ENCODE measurements at regions of chr1 and their contacts with region 1.

Region 1: DNA sequence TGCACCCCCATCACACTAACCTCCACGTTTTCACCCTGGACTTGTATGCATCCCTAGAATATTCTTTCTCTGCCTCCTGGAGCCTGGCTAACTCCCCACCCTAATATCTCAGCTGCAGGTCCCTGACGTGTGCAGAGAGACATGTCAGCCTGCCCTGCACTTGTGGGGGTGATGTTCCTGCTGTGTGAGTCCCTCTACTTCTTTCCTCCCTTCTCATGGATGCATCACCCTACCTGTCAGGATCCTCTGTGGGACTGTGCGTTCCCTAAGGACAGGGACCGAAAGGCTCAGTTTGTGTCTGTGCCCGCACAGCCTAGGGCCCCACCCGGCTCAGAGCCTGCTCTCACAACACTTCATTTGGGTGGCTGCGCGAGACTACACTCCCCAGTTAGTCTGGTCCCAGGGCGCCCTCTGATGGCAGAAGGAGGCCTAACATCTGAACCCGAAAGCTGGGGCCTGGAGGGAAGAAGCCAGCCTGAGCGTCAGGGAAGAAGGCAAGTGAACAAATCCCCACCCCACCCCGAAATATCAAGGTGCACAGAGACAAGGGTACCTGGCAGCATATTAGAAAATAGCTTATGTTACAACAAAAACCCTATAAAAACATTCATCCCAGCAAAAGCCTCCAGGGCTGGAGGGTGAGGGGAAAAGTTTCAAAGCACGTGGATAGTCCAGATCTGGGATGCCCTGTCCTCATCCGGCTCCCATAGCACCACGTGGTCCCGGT is 3.7 kb downstream of the CD52 start:
- DNase-seq: peak; percentile 24
- H3K4me3 ChIP-seq: no peak overlapping the region; the same call in 1 of the 2 replicates
- CTCF ChIP-seq: peak; percentile 94

Region 2: DNA sequence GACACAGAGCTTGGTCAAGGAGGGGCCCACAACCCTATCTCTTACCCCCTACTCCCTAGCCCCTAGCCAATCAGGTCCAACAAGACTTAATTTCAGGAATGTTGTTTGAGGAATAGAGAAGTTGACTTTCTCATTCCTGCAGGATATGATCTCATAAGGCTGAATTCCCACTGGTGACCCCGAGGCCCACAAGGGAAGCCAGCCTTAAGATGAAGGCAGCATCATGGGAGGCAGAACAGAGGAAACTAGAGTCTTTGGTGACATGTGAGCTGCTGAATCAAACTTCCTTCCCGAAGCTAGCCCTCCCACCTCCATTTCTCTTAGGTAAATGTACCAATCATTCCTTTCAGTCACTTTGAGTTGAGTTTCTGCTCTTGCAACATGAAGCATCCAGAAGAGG is 219.0 kb before region 1 on chr1:
- CTCF ChIA-PET with region 1: interaction called, 16 read pairs
- POLR2A ChIA-PET with region 1: no interaction called
- DNase-seq: no peak
- H3K4me3 ChIP-seq: no peak overlapping the region
- CTCF ChIP-seq: no peak

Region 3: DNA sequence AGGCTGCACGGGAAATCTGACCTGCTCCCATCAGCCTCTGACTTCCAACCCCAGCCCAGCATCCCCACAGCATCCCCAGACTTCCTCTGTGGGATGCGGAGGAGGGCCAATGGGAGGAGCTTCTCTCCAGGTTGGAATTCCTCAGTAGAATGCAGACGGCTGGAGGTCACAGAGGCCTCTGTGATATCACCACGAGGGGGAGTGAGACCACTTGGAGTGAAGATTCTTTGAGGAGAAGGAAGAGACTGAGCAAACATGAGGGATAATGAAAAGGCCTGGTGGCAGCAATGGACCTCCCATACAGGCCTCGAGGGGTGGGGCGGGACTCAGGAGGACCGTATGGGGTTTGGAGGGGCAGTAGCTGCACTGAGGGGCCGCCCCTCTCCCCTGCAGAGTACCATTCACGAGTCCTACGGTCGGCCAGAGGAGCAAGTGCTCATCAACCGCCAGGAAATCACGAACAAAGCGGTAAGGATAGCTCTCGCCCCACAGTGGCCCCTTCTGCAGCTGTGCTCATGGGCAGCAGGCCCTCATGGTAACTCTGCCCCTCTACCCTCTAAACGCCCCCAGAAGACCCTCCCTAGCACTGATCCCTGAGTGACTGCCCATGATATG is 131.0 kb before region 1 on chr1 and contains the start of gene CATSPER4:
- CTCF ChIA-PET with region 1: interaction called, 13 read pairs
- POLR2A ChIA-PET with region 1: no interaction called
- DNase-seq: no peak
- H3K4me3 ChIP-seq: no peak within 1 kb of the TSS
- CTCF ChIP-seq: no peak

Region 4: GRCh38 chr1:26279456-26280332 is 41.8 kb before region 1 on chr1 and contains the start of gene SH3BGRL3:
- CTCF ChIA-PET with region 1: interaction called, 179 read pairs
- POLR2A ChIA-PET with region 1: interaction called, 4 read pairs
- DNase-seq: no peak
- H3K4me3 ChIP-seq: peak within 1 kb of the TSS; percentile 81
- CTCF ChIP-seq: peak; percentile 75

Region 5: GRCh38 chr1:26306290-26307229 is 14.9 kb before region 1 on chr1 and contains the start of gene UBXN11:
- CTCF ChIA-PET with region 1: interaction called, 139 read pairs
- POLR2A ChIA-PET with region 1: interaction called, 3 read pairs
- DNase-seq: peak; percentile 64
- H3K4me3 ChIP-seq: peak within 1 kb of the TSS; percentile 94
- CTCF ChIP-seq: no peak

Region 6: DNA sequence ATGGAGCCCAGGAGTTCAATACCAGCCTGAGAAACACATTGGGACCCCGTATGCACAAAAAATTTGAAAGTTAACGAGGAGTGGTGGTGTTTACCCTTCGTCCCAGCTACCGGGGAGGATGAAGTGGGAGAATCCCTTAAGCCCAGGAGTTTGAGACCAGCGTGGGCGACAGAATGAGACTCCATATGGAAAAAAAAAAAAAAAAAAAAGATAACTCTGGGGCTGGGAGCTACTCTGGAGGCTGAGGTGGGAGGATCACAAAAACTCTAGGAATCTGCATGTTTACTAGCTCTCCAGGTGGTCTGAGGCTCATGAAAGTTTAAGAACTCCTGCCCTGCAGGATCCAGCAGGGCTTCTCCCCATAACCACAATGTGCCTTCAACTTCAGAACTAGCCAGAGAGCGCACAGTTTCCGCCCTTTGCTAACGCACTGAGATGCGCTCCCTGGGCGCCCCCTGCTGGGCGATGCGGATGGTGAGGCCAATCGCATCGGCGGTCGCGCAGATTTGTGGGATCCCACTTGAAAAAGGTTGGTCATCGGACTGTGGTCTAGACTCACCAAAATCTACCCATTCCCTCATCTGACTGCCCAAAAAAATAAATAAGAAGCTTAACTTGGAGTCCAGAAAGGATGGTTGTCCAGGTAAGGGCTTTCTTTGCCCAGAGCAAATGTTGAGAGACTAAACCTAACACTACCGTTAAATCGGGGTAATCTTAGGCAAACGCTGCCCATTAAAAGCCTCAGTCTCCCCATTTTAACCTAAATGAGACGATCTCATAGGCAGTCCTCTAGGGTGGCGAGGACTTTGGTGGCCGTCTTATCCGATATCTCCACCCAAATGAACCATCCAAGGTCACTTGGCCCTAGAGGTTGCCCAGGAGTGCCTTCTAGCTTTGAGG is 42.3 kb after region 1 on chr1:
- CTCF ChIA-PET with region 1: interaction called, 28 read pairs
- POLR2A ChIA-PET with region 1: no interaction called
- DNase-seq: no peak
- H3K4me3 ChIP-seq: no peak overlapping the region
- CTCF ChIP-seq: peak; percentile 92

Region 7: DNA sequence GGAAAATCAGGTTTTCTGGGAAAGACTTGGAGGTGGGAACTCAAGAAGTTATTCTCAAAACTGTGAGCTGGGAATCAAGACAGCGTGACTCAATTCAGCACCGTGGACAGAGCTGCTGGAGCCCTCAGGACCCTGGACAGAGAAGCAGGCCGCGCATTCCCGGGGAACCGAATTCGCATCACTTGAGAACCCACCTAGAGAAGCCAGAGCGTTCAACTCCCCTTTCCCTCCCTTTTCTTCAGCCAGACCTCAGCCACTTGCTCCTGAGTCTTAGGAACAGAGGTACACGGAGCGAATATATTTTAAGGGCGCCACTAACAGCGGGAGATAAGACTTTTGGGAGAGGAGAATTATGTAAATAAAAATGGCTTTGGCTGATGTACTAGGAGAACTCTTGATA is 87.1 kb after region 1 on chr1:
- CTCF ChIA-PET with region 1: no interaction called
- POLR2A ChIA-PET with region 1: no interaction called
- DNase-seq: no peak
- H3K4me3 ChIP-seq: no peak overlapping the region
- CTCF ChIP-seq: no peak

Measured in AG04449 (cell line).